Panc1 (cell line): ENCODE measurements at regions of chr6 and their contacts with region 1.

Region 1: GRCh38 chr6:144840619-144841018 is 555.5 kb downstream of the UTRN start:
- DNase-seq: no peak
- ATAC-seq: no peak
- H3K4me3 ChIP-seq: no peak overlapping the region
- H3K27ac ChIP-seq: no peak overlapping the region
- H3K4me1 ChIP-seq: no peaks in the 10 kb centered on the region
- H3K27me3 ChIP-seq: no peaks in the 10 kb centered on the region
- CTCF ChIP-seq: no peak

Region 2: DNA sequence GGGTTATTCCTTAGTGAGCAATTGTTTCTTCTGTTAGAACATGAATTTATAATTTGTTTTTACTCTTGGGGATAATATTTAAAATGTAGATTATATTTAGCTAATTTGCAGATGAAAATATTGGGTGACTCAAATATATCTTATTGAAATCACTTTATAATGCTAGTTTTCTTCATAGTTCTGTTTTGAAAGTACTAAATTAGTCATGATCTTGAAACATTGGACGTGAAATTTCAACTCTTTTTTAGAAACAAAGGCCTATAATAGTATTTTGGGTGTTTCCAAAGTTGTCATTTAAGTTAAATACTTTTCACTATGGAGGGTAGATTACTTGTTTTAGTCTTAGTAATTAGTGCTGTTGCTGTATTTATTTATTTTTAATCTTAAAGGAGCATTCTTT is 304.5 kb before region 1 on chr6:
- CTCF ChIA-PET with region 1: interaction called, 12 read pairs
- POLR2A ChIA-PET with region 1: no interaction called
- in situ Hi-C with region 1: no loop called
- intact Hi-C with region 1: no loop called
- DNase-seq: no peak
- ATAC-seq: no peak
- H3K4me3 ChIP-seq: no peak overlapping the region
- H3K27ac ChIP-seq: no peak overlapping the region
- H3K4me1 ChIP-seq: no peaks in the 10 kb centered on the region
- H3K27me3 ChIP-seq: no peaks in the 10 kb centered on the region
- CTCF ChIP-seq: no peak

Region 3: GRCh38 chr6:144931172-144932035 is 90.8 kb after region 1 on chr6:
- CTCF ChIA-PET with region 1: no interaction called
- POLR2A ChIA-PET with region 1: no interaction called
- in situ Hi-C with region 1: no loop called
- intact Hi-C with region 1: no loop called
- DNase-seq: peak; percentile 25
- ATAC-seq: peak; percentile 79
- H3K4me3 ChIP-seq: no peak overlapping the region
- H3K27ac ChIP-seq: no peak overlapping the region
- H3K4me1 ChIP-seq: no peaks in the 10 kb centered on the region
- H3K27me3 ChIP-seq: no peaks in the 10 kb centered on the region
- CTCF ChIP-seq: peak; percentile 70